T-cell (primary cell): ENCODE measurements at regions of chr14 and their contacts with region 1.

Region 1: GRCh38 chr14:67883717-67884116 is 64.1 kb downstream of the RAD51B start:
- DNase-seq: peak in 1 of 35 experiments; percentile 12
- ATAC-seq: no peak
- H3K4me3 ChIP-seq: no peak overlapping the region
- H3K4me3 Mint-ChIP-seq: no peak overlapping the region
- H3K27ac ChIP-seq: no peak overlapping the region
- H3K27ac Mint-ChIP-seq: no peak overlapping the region
- H3K4me1 ChIP-seq: peaks cover 3 to 13% of the 10 kb centered on the region in 2 experiments
- H3K4me1 Mint-ChIP-seq: peaks cover 17 to 32% (median 23%) of the 10 kb centered on the region in 3 donors
- H3K27me3 ChIP-seq: no peaks in the 10 kb centered on the region
- H3K27me3 Mint-ChIP-seq: no peaks in the 10 kb centered on the region

Region 2: GRCh38 chr14:68172627-68173026 is 288.9 kb after region 1 on chr14:
- CTCF ChIA-PET with region 1: no interaction called
- POLR2A ChIA-PET with region 1: no interaction called
- DNase-seq: no peak
- ATAC-seq: no peak
- H3K4me3 ChIP-seq: no peak overlapping the region
- H3K4me3 Mint-ChIP-seq: no peak overlapping the region
- H3K27ac ChIP-seq: no peak overlapping the region
- H3K27ac Mint-ChIP-seq: no peak overlapping the region
- H3K4me1 ChIP-seq: no peaks in the 10 kb centered on the region
- H3K4me1 Mint-ChIP-seq: no peaks in the 10 kb centered on the region
- H3K27me3 ChIP-seq: no peaks in the 10 kb centered on the region
- H3K27me3 Mint-ChIP-seq: no peaks in the 10 kb centered on the region

Region 3: GRCh38 chr14:68843471-68844209 is 959.9 kb after region 1 on chr14:
- CTCF ChIA-PET with region 1: interaction called, 8 to 10 read pairs
- POLR2A ChIA-PET with region 1: no interaction called
- DNase-seq: peak; percentile 46 to 85 (median 69)
- ATAC-seq: peak; percentile 61 to 89 (median 82)
- H3K4me3 ChIP-seq: peak overlapping the region in 1 of 2 donors; percentile 23
- H3K4me3 Mint-ChIP-seq: peak overlapping the region; percentile 25 to 50 (median 37)
- H3K27ac ChIP-seq: no peak overlapping the region
- H3K27ac Mint-ChIP-seq: no peak overlapping the region
- H3K4me1 ChIP-seq: peaks cover 6 to 19% of the 10 kb centered on the region in 2 experiments
- H3K4me1 Mint-ChIP-seq: peaks cover 19 to 32% (median 20%) of the 10 kb centered on the region in 3 donors
- H3K27me3 ChIP-seq: peaks cover 0 to 11% of the 10 kb centered on the region in 2 experiments
- H3K27me3 Mint-ChIP-seq: peaks cover 0 to 8% of the 10 kb centered on the region in 2 donors